Calu3 (cell line): ENCODE measurements at regions of chr2 and their contacts with region 1.

Region 1: GRCh38 chr2:219119422-219120043 is 41.1 kb downstream of the NHEJ1 start:
- DNase-seq: peak; percentile 75
- H3K4me3 Mint-ChIP-seq: no peak overlapping the region
- H3K27ac Mint-ChIP-seq: no peak overlapping the region
- H3K4me1 Mint-ChIP-seq: peaks cover 38% of the 10 kb centered on the region
- H3K27me3 Mint-ChIP-seq: no peaks in the 10 kb centered on the region
- CTCF ChIP-seq: peak; percentile 46

Region 2: GRCh38 chr2:219010162-219010756 is 109.3 kb before region 1 on chr2:
- CTCF ChIA-PET with region 1: interaction called, 3 read pairs
- intact Hi-C with region 1: loop called (anchors 5 kb)
- DNase-seq: peak; percentile 73
- H3K4me3 Mint-ChIP-seq: no peak overlapping the region
- H3K27ac Mint-ChIP-seq: no peak overlapping the region
- H3K4me1 Mint-ChIP-seq: no peaks in the 10 kb centered on the region
- H3K27me3 Mint-ChIP-seq: peaks cover 40% of the 10 kb centered on the region
- CTCF ChIP-seq: peak; percentile 71

Region 3: DNA sequence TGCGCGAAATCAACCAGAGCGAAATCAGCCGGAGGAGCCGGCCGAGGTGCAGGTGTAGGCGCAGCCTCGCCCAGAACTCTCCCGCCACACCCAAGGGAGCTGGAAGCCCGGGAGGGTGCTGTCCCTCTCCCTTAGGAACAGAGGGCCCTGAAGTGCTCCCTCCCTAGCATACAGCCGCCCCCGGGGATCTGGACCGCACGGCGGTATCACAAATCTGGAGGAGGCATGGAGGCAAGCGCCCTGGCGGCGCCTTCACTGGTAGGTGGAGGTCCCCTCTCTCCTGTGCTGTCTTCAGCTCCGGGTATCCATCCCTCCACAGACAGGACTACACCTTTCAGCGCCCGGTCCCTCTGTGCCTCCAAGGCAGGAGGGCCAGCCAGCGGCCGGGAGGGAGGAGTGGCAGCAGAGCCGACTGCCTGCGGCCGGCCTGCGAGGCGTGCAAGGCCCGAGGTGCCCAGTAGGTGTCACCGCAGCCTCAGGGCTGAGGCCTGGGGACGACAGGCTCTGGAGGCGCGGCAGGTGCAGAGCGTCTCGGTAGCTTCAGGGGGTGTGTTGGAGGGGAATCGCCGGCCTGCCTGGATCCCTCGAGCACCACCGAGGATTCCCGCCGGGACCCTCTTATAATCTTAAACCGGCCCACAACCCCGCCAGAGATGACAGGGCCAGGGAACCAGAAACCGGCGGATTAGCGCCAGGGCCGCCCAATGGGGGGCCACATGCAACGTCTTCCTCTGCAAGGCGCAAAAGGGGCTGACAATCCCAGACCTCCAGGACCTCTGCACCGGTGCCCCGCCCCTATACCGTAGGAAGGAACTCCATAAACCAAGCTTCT is 61.6 kb before region 1 on chr2:
- CTCF ChIA-PET with region 1: interaction called, 35 read pairs
- intact Hi-C with region 1: loop called (anchors 1 kb)
- DNase-seq: peak; percentile 93
- H3K4me3 Mint-ChIP-seq: peak overlapping the region; percentile 76
- H3K27ac Mint-ChIP-seq: no peak overlapping the region
- H3K4me1 Mint-ChIP-seq: peaks cover 36% of the 10 kb centered on the region
- H3K27me3 Mint-ChIP-seq: peaks cover 22% of the 10 kb centered on the region
- CTCF ChIP-seq: peak; percentile 91

Region 4: DNA sequence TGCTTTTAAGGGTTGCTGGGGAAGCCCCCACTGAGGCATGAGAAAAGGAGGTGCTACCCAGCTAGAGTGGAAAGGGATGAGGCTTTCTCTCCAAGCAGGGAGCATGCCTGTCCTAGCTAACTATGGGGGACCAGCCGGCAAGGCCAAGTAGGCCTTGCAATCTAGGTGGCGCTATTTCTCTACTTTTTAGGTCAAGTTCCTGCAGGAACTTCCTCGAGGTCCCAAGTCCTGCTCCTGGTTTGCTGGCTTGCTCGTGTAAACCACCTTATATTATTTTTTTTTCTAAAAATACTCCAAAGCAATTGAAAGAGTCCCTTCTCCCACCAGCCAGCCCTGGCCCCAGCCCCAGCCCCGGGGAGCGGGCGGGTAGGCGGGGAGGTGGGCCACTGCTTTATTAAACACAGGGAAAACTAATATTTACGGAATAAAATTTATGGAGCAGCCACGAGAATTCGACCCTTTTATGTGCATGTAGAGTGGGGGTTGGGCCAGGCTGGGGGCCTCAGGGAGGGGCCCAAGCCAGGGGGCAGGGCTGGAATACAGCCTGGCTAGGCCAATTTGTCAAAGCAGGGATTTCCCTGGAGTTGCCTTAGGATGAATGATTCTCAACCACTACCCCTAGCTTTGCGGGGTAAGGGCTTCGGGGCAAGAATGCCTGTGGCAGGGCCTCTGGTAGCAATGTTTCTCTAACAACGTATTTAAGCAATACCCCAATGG is 46.0 kb before region 1 on chr2:
- CTCF ChIA-PET with region 1: interaction called, 16 read pairs
- intact Hi-C with region 1: loop called (anchors 5 kb)
- DNase-seq: peak; percentile 58
- H3K4me3 Mint-ChIP-seq: no peak overlapping the region
- H3K27ac Mint-ChIP-seq: no peak overlapping the region
- H3K4me1 Mint-ChIP-seq: peaks cover 24% of the 10 kb centered on the region
- H3K27me3 Mint-ChIP-seq: no peaks in the 10 kb centered on the region
- CTCF ChIP-seq: peak; percentile 77

Region 5: GRCh38 chr2:219087848-219088247 is 31.7 kb before region 1 on chr2:
- CTCF ChIA-PET with region 1: no interaction called
- intact Hi-C with region 1: no loop called
- DNase-seq: no peak
- H3K4me3 Mint-ChIP-seq: no peak overlapping the region
- H3K27ac Mint-ChIP-seq: no peak overlapping the region
- H3K4me1 Mint-ChIP-seq: peaks cover 9% of the 10 kb centered on the region
- H3K27me3 Mint-ChIP-seq: no peaks in the 10 kb centered on the region
- CTCF ChIP-seq: no peak

Region 6: GRCh38 chr2:219104107-219105035 is 15.2 kb before region 1 on chr2:
- CTCF ChIA-PET with region 1: interaction called, 10 read pairs
- intact Hi-C with region 1: no loop called
- DNase-seq: peak; percentile 43
- H3K4me3 Mint-ChIP-seq: no peak overlapping the region
- H3K27ac Mint-ChIP-seq: no peak overlapping the region
- H3K4me1 Mint-ChIP-seq: no peaks in the 10 kb centered on the region
- H3K27me3 Mint-ChIP-seq: no peaks in the 10 kb centered on the region
- CTCF ChIP-seq: peak; percentile 88

Region 7: GRCh38 chr2:219269362-219270054 is 150.0 kb after region 1 on chr2:
- CTCF ChIA-PET with region 1: no interaction called
- intact Hi-C with region 1: no loop called
- DNase-seq: peak; percentile 33
- H3K4me3 Mint-ChIP-seq: no peak overlapping the region
- H3K27ac Mint-ChIP-seq: no peak overlapping the region
- H3K4me1 Mint-ChIP-seq: peaks cover 21% of the 10 kb centered on the region
- H3K27me3 Mint-ChIP-seq: no peaks in the 10 kb centered on the region
- CTCF ChIP-seq: no peak